GM10248 (cell line): ENCODE measurements at regions of chr9 and their contacts with region 1.

Region 1: DNA sequence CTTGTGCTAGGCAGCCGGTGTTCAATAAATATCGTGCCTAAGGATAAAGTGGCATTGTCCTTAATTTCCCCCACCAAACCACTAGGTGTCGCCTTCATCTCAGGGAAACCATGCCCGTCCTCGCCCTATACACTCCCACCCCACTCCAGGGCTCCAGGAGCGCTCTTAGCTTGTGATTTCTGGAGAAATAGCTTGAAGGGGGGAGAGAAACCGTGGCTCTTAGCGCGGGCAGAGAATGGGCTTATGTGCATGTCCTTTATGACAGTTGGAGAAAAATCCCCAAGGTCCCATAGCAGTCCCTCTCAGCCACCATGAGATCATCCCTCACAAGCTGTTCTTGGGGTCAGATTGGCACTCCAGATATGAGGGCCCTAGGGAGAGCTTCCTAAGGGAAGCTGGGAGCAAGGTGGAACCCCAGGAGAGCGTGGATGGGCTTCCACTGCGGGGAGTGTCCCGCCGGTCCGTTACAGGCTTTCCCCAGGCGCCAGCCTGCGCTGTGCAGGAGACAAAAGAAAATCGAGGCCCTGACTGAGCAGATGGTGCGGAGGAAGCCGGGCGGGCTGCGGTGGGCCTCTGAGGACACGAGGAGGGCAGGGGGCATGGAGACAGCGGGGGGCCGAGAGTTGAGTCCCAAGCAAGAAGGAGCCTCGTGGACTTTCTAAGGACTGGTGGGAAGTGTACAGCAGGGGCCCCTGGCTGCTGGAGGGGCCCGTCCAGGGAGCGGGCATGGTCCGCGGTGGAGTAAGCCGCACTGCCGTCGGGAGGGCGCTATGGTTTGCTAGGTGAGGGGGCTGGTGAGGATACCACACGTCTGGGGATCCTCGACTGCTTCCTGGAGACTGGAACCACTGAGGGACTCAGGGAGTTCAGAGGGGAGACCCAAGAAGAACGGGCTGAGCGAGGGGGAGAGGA is 750 bp upstream of the NPR2 start:
- DNase-seq: peak; percentile 85
- CTCF ChIP-seq: peak; percentile 67

Region 2: DNA sequence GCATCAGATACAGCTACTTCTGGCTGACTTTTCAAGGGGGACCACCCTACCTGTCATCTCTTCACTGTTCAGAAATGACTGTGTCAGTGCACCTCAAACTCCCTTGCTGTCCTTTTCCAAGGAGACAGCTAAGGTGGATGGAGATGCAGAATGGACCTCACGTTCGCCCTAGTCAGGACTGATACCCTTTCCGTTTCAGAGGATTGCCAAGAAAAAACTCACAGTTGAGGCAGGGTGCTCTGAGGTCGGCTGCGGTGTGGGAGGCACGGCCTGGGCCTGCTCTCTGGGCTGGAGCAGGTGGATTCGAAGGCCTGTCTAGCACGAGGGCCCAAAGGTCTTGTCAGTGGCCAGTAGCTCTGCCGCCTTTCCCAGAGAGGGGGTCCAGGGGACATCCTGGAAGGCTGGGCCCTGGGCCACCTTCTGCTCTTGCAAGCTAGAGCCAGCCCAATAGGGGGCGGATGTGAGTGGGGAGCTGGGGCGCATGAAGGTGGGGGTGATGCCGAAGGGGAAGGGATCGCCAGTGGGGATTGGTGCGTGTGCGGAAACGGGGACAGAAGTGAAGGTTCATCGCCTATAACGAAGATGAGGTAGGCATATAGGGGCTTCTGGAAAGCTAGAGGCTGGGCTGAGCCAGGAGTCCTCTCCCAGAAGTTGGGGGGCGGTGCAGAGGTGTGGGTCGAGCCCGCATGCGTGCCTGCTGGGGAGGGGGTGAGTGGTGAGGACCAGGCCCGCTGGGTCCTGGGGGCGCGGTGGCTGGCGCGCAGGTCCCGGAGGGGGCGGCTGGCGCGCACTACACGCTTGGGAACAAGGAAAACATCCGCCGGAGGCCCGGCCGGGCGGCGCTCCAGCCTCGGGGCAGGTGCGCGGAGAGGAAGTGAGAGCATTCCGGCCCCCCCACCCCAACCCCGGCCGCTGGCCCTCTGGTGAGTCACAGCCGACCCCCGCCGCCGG is 34.1 kb before region 1 on chr9:
- CTCF ChIA-PET with region 1: interaction called, 11 read pairs
- POLR2A ChIA-PET with region 1: no interaction called
- DNase-seq: peak; percentile 78
- CTCF ChIP-seq: peak; percentile 84

Region 3: DNA sequence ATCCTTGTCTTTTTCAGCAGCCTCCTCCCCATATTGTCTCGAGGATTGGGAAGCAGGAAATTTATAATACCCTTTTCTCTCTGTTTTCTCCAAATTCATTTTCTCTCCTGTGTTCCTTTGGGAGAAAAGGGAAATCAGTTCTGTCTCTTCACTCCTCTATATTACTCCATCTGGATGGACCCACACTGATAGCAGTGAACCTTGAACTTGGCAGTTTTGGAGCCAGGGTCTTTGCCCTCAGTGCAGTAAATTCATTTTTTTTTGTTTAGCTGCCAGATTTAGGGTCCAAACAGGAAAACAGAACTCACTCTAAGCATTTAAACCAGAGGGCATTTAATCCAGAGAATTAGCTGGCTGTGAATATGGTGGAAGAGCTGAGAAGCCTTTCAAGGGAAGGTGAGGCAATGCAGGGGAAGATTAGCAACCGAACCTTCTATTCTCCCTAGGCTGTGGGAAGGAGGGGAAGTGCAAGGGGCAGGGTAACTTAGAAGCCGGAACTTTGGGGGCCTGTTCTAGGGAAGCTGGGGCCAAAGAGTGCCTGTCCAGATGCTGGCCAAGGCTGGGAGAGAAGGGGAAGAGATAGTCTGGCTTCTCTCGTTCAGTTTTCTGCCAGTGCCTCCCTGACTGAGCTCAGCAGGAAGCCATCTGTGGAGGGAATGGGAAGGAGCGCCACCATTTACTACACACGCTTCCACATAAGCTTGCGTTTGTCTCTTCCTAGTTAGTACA is 15.6 kb before region 1 on chr9:
- CTCF ChIA-PET with region 1: interaction called, 45 read pairs
- POLR2A ChIA-PET with region 1: interaction called, 3 read pairs
- DNase-seq: no peak
- CTCF ChIP-seq: no peak

Region 4: DNA sequence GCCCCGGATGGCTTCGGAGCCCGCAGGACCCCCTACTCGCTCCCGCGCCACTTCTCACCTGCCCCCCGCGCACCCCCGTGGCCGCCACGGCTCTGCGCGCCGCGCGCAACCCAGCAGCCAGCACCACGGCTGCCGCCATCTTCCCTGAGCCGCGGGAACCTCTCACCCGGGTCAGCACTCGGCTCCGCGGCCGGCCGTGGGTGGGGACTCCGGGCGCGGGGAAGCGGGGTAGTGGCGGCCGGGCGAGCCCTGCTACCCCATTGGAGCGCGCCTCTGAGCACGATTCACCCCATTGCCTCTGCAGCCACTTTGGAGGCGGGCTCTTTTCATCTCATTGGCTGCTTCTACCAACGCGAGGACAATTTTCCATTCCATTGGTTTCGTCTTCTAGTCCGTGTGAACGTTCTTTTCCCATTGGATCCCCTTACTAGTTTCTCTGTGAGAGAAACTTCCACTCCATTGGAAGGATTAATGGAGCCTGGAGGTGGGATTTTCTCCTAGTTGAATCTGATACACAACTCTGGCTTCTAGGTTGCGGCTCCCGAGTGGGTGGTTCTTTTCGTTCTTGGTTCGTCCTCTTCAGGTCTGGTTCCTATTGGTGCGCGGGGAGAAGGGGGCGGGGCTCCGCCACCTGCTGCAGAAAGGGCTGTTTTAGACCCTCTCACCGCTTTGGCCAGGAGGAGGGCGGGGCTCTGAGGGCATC is 24.4 kb after region 1 on chr9 and contains the start of gene HINT2:
- CTCF ChIA-PET with region 1: interaction called, 72 read pairs
- POLR2A ChIA-PET with region 1: no interaction called
- DNase-seq: peak; percentile 95
- CTCF ChIP-seq: no peak

Region 5: GRCh38 chr9:35820076-35820475 is 29.4 kb after region 1 on chr9:
- CTCF ChIA-PET with region 1: interaction called, 18 read pairs
- POLR2A ChIA-PET with region 1: no interaction called
- DNase-seq: no peak
- CTCF ChIP-seq: no peak

Region 6: GRCh38 chr9:35882263-35882848 is 91.7 kb after region 1 on chr9:
- CTCF ChIA-PET with region 1: interaction called, 45 read pairs
- POLR2A ChIA-PET with region 1: no interaction called
- DNase-seq: peak; percentile 78
- CTCF ChIP-seq: peak; percentile 97